B cell (primary cell): ENCODE measurements at regions of chr15 and their contacts with region 1.

Region 1: GRCh38 chr15:88246666-88247446 is 9.7 kb downstream of the NTRK3 start:
- DNase-seq: peak; percentile 73
- ATAC-seq: peak; percentile 73
- H3K4me3 ChIP-seq: no peak overlapping the region
- H3K4me3 Mint-ChIP-seq: no peak overlapping the region
- H3K27ac ChIP-seq: no peak overlapping the region
- H3K27ac Mint-ChIP-seq: no peak overlapping the region
- H3K4me1 ChIP-seq: peaks cover 0 to 5% of the 10 kb centered on the region in 2 donors
- H3K4me1 Mint-ChIP-seq: peaks cover 6% of the 10 kb centered on the region
- H3K27me3 ChIP-seq: peaks cover 0 to 22% (median 2%) of the 10 kb centered on the region in 4 experiments
- H3K27me3 Mint-ChIP-seq: peaks cover 32% of the 10 kb centered on the region
- CTCF ChIP-seq: peak; percentile 97

Region 2: DNA sequence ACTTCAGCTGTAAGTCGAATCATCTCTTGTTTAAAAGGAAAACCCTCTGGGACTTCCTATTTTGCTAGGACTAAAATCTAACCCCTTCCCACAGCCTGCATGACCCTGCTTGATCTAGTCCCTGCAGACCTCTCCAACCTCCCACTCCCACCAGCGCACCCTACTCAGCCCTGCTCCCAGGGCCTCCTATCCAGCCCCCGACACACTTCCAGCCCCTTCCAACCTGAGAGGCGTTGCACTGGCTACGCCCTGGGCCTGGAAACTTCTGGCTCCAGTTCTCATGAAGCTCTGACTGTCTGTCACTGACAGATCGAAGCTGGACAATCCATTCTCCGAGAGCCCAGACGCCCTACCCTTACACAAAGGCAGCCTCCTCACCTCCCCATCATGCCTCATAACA is 12.1 kb before region 1 on chr15:
- CTCF ChIA-PET with region 1: interaction called, 33 read pairs
- POLR2A ChIA-PET with region 1: no interaction called
- intact Hi-C with region 1: no loop called
- DNase-seq: no peak
- ATAC-seq: no peak
- H3K4me3 ChIP-seq: no peak overlapping the region
- H3K4me3 Mint-ChIP-seq: no peak overlapping the region
- H3K27ac ChIP-seq: no peak overlapping the region
- H3K27ac Mint-ChIP-seq: no peak overlapping the region
- H3K4me1 ChIP-seq: no peaks in the 10 kb centered on the region
- H3K4me1 Mint-ChIP-seq: no peaks in the 10 kb centered on the region
- H3K27me3 ChIP-seq: no peaks in the 10 kb centered on the region
- H3K27me3 Mint-ChIP-seq: peaks cover 38% of the 10 kb centered on the region
- CTCF ChIP-seq: no peak

Region 3: DNA sequence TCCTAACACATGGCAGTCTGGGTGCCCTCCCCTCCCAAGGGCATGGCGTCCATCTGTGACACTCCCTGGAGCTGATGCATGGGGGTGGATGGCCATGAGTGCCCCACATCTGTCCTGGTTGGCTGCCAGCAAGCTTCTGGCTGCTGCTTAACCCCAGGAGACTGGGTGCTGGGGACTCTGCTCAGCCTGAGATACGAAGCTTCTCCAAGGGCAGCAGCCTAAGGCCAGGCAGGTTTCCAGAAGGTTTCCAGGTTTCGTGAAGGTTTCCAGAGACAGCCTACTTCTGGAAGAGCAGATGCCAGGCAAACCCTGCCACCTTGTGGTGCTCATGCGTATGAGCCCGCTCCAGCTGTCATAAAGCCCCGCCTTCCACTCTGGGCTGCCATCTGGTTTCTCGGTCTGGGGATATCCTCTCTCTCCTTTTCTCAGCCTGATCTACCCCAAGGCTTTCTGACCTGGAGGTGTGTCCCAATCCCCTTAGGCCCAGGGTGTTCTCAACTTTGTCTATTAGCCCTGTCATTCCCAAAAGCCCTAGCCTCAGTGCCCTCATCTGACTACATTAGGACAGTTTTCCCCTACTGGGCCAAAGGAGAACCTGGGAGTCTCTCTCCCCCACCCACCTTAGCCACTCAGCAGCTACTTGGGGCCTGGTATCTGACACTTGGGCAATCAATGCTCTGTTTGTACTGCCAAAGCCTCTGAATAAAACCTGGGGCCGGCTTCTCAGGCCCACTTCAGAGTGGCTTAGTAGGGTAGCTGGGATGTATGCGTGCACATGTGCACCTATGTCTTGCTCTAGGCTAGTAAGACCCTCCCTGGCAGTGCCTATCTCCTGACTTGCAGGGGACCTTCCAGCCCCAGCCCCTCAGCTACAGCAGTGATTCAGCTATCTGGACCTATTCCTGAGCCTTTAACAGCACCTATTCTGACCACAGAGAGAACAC is 208.3 kb after region 1 on chr15:
- CTCF ChIA-PET with region 1: interaction called, 5 read pairs
- POLR2A ChIA-PET with region 1: no interaction called
- intact Hi-C with region 1: loop called (anchors 10 kb)
- DNase-seq: peak; percentile 49
- ATAC-seq: peak; percentile 61
- H3K4me3 ChIP-seq: no peak overlapping the region
- H3K4me3 Mint-ChIP-seq: no peak overlapping the region
- H3K27ac ChIP-seq: no peak overlapping the region
- H3K27ac Mint-ChIP-seq: no peak overlapping the region
- H3K4me1 ChIP-seq: peaks cover 0 to 6% of the 10 kb centered on the region in 2 donors
- H3K4me1 Mint-ChIP-seq: peaks cover under 1% of the 10 kb centered on the region
- H3K27me3 ChIP-seq: peaks cover 0 to 5% (median 0%) of the 10 kb centered on the region in 4 experiments
- H3K27me3 Mint-ChIP-seq: no peaks in the 10 kb centered on the region
- CTCF ChIP-seq: peak; percentile 65

Region 4: GRCh38 chr15:88834211-88834812 is 587.5 kb after region 1 on chr15:
- CTCF ChIA-PET with region 1: no interaction called
- POLR2A ChIA-PET with region 1: no interaction called
- intact Hi-C with region 1: no loop called
- DNase-seq: peak; percentile 48
- ATAC-seq: no peak
- H3K4me3 ChIP-seq: no peak overlapping the region
- H3K4me3 Mint-ChIP-seq: no peak overlapping the region
- H3K27ac ChIP-seq: no peak overlapping the region
- H3K27ac Mint-ChIP-seq: no peak overlapping the region
- H3K4me1 ChIP-seq: peaks cover 0 to 3% of the 10 kb centered on the region in 2 donors
- H3K4me1 Mint-ChIP-seq: no peaks in the 10 kb centered on the region
- H3K27me3 ChIP-seq: peaks cover 0 to 5% (median 0%) of the 10 kb centered on the region in 4 experiments
- H3K27me3 Mint-ChIP-seq: peaks cover 3% of the 10 kb centered on the region
- CTCF ChIP-seq: peak; percentile 47